ENCODE measurements at regions of chr5 and their contacts with region 1.

Region 1: DNA sequence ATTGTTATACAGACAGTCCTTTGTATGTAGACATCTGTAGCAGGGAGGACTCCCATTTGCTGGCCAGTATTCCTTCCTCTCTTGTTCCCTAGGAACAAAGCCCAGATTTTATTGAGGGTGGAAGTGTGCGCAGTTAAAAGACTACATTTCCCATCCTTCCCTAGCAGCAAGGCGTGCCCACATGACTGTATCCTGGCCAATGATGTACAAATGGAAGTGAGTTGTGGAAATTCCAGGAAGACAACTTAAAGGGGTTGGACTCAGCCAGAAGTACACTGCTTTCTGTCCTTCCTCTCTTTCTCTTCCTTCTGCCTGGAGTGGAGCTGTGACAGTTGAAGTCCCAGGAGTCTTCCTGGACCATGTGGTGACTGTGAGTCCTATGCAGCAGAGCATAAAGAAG is 89.0 kb downstream of the HRH2 start:
- DNase-seq: no peak
- ATAC-seq: no peak
- H3K4me3 ChIP-seq: no peak overlapping the region
- H3K27ac ChIP-seq: no peak overlapping the region
- H3K4me1 ChIP-seq: no peaks in the 10 kb centered on the region
- H3K27me3 ChIP-seq: peaks cover 0 to 48% (median 21%) of the 10 kb centered on the region in 7 donors
- CTCF ChIP-seq: no peak

Region 2: GRCh38 chr5:175867587-175868347 is 120.9 kb after region 1 on chr5:
- intact Hi-C with region 1: loop called in 1 of 10 experiments (anchors 10 kb)
- DNase-seq: no peak
- ATAC-seq: no peak
- H3K4me3 ChIP-seq: no peak overlapping the region
- H3K27ac ChIP-seq: no peak overlapping the region
- H3K4me1 ChIP-seq: peaks cover 0 to 15% (median 13%) of the 10 kb centered on the region in 9 donors
- H3K27me3 ChIP-seq: peaks cover 9 to 47% (median 36%) of the 10 kb centered on the region in 7 donors
- CTCF ChIP-seq: no peak

Measured in heart right ventricle (tissue), 16 donors.